Naive thymus-derived CD4-positive, alpha-beta T cell (primary cell): ENCODE measurements at regions of chr12 and their contacts with region 1.

Region 1: DNA sequence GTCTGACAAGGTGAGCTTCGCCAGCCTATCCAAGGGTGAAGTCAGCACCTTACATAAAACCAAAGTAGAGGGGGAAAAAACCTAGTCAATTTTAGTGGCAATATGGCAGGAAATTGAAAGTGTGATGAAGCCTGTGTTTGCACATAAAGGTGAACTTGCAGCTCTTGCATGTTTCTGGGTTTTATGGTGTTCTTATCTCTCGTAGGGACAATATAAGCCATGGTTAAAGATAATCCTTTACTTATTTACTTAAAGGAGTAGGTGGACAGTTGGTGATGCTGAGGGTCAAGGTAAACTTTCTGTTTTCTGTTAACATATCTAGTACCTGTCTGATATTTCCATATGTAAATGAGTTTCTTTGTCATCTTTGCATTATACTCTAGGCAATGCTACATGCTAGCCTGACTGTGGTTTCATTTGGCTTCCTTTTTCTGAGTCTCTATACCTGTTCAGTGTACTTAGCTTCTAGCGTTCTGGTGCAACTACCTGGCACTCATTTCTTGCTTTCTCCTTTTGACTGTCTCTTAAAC is 32.8 kb downstream of the CCDC91 start:
- DNase-seq: peak in 6 of 9 donors; percentile 10 to 44 (median 25)
- ATAC-seq: peak; percentile 79
- H3K4me3 ChIP-seq: peak overlapping the region; percentile 3
- H3K4me3 Mint-ChIP-seq: peak overlapping the region; percentile 31 to 85 (median 74)
- H3K27ac ChIP-seq: no peak overlapping the region
- H3K27ac Mint-ChIP-seq: peak overlapping the region; percentile 19 to 84 (median 46)
- H3K4me1 ChIP-seq: peaks cover 34 to 37% of the 10 kb centered on the region in 2 donors
- H3K4me1 Mint-ChIP-seq: peaks cover 34 to 70% (median 63%) of the 10 kb centered on the region in 7 donors
- H3K27me3 ChIP-seq: no peaks in the 10 kb centered on the region
- H3K27me3 Mint-ChIP-seq: peaks cover 0 to 10% (median 0%) of the 10 kb centered on the region in 5 donors

Region 2: DNA sequence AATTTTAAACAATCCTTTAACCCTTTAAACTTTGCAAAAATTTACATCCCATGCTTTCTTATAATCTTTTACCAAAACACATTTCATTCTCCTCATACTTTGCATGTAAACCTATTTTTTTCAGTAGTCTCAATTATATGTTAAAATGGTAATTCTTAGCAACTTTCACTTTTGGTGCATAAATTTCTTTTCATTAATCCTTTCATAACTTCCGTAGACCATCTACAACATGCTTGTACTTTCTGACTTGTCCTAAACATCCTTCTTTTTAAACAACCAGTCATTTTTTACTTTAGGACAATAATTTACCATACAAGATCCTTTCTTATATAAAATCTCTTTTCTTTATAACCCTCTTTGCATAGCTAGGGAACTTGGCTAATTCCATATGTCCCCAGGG is 13.3 kb before region 1 on chr12:
- CTCF ChIA-PET with region 1: no interaction called
- POLR2A ChIA-PET with region 1: no interaction called
- intact Hi-C with region 1: loop called in 1 of 2 experiments (anchors 2 kb)
- DNase-seq: no peak
- ATAC-seq: no peak
- H3K4me3 ChIP-seq: no peak overlapping the region
- H3K4me3 Mint-ChIP-seq: peak overlapping the region in 1 of 10 donors; percentile 25
- H3K27ac ChIP-seq: no peak overlapping the region
- H3K27ac Mint-ChIP-seq: peak overlapping the region in 1 of 9 donors; percentile 10
- H3K4me1 ChIP-seq: peaks cover 0 to 3% of the 10 kb centered on the region in 2 donors
- H3K4me1 Mint-ChIP-seq: peaks cover 0 to 58% (median 38%) of the 10 kb centered on the region in 7 donors
- H3K27me3 ChIP-seq: no peaks in the 10 kb centered on the region
- H3K27me3 Mint-ChIP-seq: no peaks in the 10 kb centered on the region

Region 3: DNA sequence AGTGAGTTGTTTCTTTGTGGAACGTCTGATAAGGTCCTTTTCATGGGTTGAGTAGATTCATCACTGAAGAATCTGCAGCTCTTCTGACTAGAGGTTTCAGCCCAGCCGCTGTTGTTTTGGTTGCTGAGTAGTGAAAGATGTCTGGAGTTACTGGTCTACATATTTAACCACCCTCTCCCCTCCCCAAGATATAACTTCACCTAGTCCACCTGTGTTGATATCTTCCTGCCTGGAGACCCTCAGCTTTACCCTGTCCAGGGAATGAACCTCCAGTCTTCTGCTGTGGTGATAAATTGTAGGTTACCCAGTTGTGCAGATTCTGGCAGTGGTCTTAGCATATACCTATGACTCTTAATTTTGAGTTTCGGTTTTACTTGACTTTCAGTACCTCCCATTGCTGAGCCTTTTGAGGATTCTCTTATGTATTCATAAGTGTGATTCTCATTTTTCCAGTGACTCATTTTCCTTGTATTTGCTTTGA is 30.1 kb after region 1 on chr12:
- CTCF ChIA-PET with region 1: no interaction called
- POLR2A ChIA-PET with region 1: no interaction called
- intact Hi-C with region 1: loop called (anchors 1 to 2 kb)
- DNase-seq: peak in 8 of 9 donors; percentile 4 to 45 (median 21)
- ATAC-seq: peak; percentile 78
- H3K4me3 ChIP-seq: peak overlapping the region; percentile 18
- H3K4me3 Mint-ChIP-seq: peak overlapping the region; percentile 55 to 83 (median 80)
- H3K27ac ChIP-seq: no peak overlapping the region
- H3K27ac Mint-ChIP-seq: peak overlapping the region; percentile 66 to 89 (median 79)
- H3K4me1 ChIP-seq: peaks cover 16 to 29% of the 10 kb centered on the region in 2 donors
- H3K4me1 Mint-ChIP-seq: peaks cover 35 to 64% (median 58%) of the 10 kb centered on the region in 7 donors
- H3K27me3 ChIP-seq: no peaks in the 10 kb centered on the region
- H3K27me3 Mint-ChIP-seq: no peaks in the 10 kb centered on the region

Region 4: DNA sequence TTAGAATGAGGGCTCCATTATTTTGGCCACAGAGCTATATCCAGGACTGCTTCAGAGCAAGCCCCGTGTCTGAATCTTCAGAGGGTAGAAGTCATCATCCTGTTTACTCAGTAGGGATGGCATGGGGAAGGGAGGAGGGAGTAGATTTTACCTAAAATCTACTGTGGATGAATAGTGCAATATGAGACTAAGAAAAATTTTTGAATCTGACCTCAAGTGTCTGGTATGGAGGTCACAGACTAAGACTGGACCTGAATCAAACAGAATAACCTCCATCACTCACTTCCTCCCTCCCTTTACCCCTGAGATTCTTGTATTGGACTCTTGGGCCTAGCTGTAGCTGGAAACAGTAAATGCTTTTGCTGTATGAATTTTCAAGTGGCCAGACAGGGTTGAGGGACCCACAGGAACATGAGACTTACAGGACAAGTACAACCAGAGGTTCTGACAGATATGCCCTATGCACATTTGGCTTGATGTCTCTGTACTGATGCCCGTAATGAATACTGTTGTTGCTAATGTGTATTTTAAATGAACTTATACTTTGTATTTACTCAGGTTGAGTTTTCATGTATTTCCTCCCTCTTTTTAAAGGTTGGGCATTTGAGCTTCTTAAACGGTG is 45.6 kb after region 1 on chr12:
- CTCF ChIA-PET with region 1: interaction called, 3 read pairs
- POLR2A ChIA-PET with region 1: interaction called, 4 read pairs
- intact Hi-C with region 1: loop called in 1 of 2 experiments (anchors 5 kb)
- DNase-seq: no peak
- ATAC-seq: no peak
- H3K4me3 ChIP-seq: no peak overlapping the region
- H3K4me3 Mint-ChIP-seq: no peak overlapping the region
- H3K27ac ChIP-seq: no peak overlapping the region
- H3K27ac Mint-ChIP-seq: no peak overlapping the region
- H3K4me1 ChIP-seq: no peaks in the 10 kb centered on the region
- H3K4me1 Mint-ChIP-seq: peaks cover 0 to 4% (median 0%) of the 10 kb centered on the region in 7 donors
- H3K27me3 ChIP-seq: no peaks in the 10 kb centered on the region
- H3K27me3 Mint-ChIP-seq: no peaks in the 10 kb centered on the region